Esophagus squamous epithelium (tissue), 5 donors: ENCODE measurements at regions of chr12 and their contacts with region 1.

Region 1: GRCh38 chr12:42156232-42156631 is 11.6 kb upstream of the GXYLT1 start:
- DNase-seq: no peak
- H3K4me3 ChIP-seq: no peak overlapping the region
- H3K27ac ChIP-seq: no peak overlapping the region
- H3K4me1 ChIP-seq: no peaks in the 10 kb centered on the region
- H3K27me3 ChIP-seq: no peaks in the 10 kb centered on the region
- CTCF ChIP-seq: no peak
- POLR2A ChIP-seq: no peak

Region 2: DNA sequence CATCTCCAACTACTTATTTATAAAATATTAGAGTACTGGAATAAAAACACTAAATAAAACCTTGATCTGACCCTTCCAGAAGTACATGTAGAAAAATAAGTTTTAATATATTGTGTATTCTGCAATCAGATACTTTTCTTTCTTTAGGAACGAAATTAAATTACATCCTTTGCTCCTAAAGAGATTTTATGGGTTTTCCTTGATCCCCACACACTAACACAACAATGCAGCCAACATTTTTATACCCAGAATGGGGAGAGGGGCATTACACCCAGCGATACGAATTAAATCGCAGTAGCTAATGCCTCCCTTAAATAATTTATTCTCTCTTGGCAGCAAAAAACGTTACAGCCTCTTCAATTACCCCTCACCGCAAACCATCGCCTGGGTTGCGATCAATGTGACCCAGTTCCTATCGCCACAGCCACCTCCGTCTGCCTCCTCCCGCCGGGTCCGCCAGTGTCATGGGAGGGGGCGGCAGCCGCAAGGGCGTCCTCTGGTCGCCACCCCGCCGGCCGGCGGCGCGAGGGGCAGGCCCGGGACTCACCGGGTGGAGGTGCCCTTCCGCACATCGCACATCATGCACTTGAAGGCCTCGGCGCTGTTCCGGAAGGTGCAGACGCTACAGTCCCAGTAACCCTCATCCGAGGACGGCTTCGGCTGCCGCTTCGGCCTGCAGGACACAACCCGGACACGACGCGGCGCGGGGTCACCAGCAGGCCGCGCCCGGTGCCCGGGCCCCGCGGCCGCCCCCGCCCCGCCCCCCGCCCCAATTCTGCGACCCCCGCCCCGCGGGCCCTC is 81.0 kb after region 1 on chr12:
- intact Hi-C with region 1: loop called (anchors 10 kb)
- DNase-seq: peak; percentile 17
- H3K4me3 ChIP-seq: peak overlapping the region; percentile 67 to 97 (median 91)
- H3K27ac ChIP-seq: peak overlapping the region; percentile 90 to 98 (median 96)
- H3K4me1 ChIP-seq: peaks cover 4 to 40% (median 18%) of the 10 kb centered on the region in 3 donors
- H3K27me3 ChIP-seq: no peaks in the 10 kb centered on the region
- CTCF ChIP-seq: peak in 4 of 6 experiments; percentile 15 to 55 (median 36)
- POLR2A ChIP-seq: no peak